GM23248 (cell line): ENCODE measurements at regions of chr5 and their contacts with region 1.

Region 1: DNA sequence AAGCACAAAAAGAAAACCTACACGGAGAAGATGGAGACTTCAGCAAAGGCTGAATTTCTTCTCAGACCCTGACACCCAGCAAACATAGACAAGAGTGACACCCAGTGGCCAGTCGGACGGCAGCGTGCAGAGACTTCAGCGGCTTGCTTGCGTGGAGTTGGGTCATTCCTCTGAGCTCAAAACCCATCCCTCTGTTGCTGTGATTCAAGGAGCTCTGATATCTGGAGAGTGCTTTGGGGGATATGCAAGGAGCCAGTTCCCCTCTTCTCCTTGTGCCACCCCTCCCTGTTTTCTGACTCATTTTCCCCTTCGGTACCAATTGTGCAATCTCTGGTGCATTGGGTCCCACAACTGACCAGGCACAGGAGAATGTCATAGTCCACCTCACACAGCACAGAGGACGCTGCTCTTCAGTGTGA is 27.5 kb downstream of the SH3TC2 start:
- DNase-seq: peak; percentile 86
- H3K4me3 ChIP-seq: no peak overlapping the region
- H3K27ac ChIP-seq: no peak overlapping the region
- H3K4me1 ChIP-seq: no peaks in the 10 kb centered on the region
- H3K27me3 ChIP-seq: no peaks in the 10 kb centered on the region

Region 2: DNA sequence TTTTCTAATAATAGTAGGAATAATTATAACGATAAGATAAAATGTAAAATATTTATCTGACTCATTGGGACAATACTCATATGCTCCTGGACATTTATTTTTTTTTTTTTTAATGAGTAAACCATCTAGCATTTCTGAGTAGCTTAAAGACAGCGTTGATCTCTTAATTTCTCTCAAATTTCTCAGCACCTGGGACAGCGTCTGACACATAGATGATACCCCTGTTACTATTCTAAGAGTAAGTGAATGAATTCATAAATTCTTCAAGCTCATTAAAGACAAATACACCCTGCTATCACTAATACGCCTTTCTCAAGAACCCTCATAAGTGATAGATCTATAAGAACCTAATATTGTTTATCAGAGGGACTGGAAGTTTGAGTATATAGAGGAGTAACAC is 369.0 kb before region 1 on chr5:
- in situ Hi-C with region 1: no loop called
- DNase-seq: peak; percentile 10
- H3K4me3 ChIP-seq: no peak overlapping the region
- H3K27ac ChIP-seq: no peak overlapping the region
- H3K4me1 ChIP-seq: no peaks in the 10 kb centered on the region
- H3K27me3 ChIP-seq: no peaks in the 10 kb centered on the region

Region 3: DNA sequence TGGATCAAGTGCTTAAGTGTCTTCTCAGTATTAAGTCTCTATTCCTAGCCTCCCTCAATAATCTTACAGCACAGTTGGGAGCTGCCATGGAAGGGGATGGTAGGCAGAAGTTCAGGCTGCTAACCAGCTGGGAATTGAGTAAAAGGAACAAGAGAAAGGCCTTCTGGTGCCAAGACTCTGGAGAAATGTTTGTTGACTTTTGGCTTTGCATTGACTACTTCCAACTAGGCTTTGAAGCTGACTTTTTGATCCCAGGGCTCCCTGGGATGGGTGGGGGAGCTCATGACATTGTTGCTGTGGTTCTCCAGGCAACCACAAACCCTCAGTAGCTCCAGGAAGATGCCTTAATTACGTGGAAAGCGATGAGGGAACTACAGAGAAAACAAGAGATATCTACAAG is 295.9 kb before region 1 on chr5:
- in situ Hi-C with region 1: loop called (anchors 5 kb)
- DNase-seq: no peak
- H3K4me3 ChIP-seq: no peak overlapping the region
- H3K27ac ChIP-seq: no peak overlapping the region
- H3K4me1 ChIP-seq: no peaks in the 10 kb centered on the region; the same call in 1 of the 2 replicates
- H3K27me3 ChIP-seq: 0 out of 2 replicates have a peak, but pooled peaks cover 24% of the 10 kb centered on the region